Activated CD4-positive, alpha-beta T cell treated with anti-CD3 and anti-CD28 coated beads, Interleukin-2, amount 10 ng/mL, durations not matched to agents 24 days and 14 days (primary cell): ENCODE measurements at regions of chr6 and their contacts with region 1.

Region 1: GRCh38 chr6:31680840-31681671 is at the start of gene LY6G5C:
- DNase-seq: peak; percentile 89
- H3K4me3 Mint-ChIP-seq: peak within 1 kb of the TSS; percentile 83
- H3K27ac Mint-ChIP-seq: peak within 1 kb of the TSS; percentile 82
- H3K4me1 Mint-ChIP-seq: peaks cover 25% of the 10 kb centered on the region
- H3K27me3 Mint-ChIP-seq: no peaks in the 10 kb centered on the region
- total RNA-seq, gene LY6G5C: 4.1 and 4.9 TPM in 2 replicates

Region 2: DNA sequence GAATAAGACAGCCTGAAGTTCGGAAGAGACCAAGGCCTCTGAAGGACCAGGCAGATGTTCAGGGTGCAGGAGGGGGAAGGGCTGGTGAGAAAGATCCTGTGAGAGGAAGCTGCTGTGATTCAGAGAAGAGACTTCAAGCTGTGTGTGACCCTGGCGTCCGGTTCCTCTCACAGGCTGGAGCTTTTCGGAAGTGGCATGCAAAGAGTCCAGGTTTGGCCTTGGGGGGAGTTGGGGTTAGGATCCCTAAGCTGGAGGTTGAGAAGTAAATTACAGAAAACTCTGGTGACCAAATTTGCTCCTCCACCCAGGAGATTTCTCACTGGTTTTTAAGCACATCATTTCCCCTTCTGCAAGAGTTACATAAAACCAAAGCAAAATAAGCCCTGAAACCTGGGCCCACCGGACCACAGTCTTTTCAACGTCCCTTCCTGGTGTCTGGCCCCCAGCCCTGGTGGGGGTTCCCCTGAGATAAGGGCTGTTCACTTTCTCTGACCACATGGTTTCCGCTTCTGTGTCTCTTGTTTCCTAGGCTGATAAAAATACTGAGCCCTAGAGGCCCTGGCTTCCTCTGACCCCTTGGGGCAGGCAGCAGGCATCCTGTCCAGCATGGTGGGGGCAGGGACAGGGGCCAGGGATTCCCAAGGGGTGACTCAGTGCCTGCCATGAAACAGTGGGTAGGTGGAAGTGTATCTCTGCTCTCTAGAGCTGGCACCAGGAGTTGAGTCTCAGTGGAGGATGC is 120.9 kb before region 1 on chr6:
- intact Hi-C with region 1: no loop called
- DNase-seq: peak; percentile 85
- H3K4me3 Mint-ChIP-seq: peak overlapping the region; percentile 78
- H3K27ac Mint-ChIP-seq: peak overlapping the region; percentile 86
- H3K4me1 Mint-ChIP-seq: peaks cover 60% of the 10 kb centered on the region
- H3K27me3 Mint-ChIP-seq: peaks cover 19% of the 10 kb centered on the region

Region 3: DNA sequence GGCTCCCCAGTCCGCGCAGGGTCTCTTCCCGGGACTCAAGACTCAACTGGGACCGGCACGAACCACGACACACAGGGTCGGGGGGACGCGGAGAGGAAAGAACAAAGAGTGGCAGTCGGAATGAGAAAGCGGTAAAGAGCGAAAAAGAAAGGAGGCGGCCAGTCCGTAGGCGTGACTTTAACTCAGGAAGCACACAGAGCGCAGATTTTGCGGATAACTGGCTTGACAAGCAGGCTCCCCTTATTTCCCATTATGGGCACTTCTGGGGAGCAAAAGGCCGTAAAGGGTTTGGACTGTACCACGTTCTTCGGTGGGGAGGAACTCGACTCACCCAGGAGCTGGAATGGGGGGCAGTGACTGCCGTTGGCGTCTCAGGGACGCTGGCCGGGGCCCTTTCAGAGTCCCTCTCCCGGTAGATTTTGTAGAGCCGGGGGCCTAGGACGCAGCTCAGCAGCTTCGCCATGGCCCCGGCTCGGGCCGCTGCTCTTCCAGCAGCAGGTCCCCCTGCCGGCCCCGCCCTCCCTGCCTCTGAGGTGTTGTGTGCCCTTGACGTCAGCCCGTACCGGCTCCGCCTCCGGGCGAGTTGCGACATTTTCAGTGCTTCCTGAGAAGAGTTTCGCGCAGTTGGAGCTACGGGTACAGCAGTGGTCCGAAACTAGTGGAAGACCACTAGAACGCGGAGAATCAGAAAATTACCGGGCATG is 21.9 kb after region 1 on chr6 and contains the start of gene ABHD16A:
- intact Hi-C with region 1: loop called (anchors 2 kb)
- DNase-seq: peak; percentile 99
- H3K4me3 Mint-ChIP-seq: peak within 1 kb of the TSS; percentile 98
- H3K27ac Mint-ChIP-seq: peak within 1 kb of the TSS; percentile 99
- H3K4me1 Mint-ChIP-seq: peaks cover 24% of the 10 kb centered on the region
- H3K27me3 Mint-ChIP-seq: no peaks in the 10 kb centered on the region
- total RNA-seq, gene ABHD16A: 43.1 and 44.7 TPM in 2 replicates

Region 4: GRCh38 chr6:31769684-31770371 is 88.8 kb after region 1 on chr6:
- intact Hi-C with region 1: loop called (anchors 1 kb)
- DNase-seq: peak; percentile 96
- H3K4me3 Mint-ChIP-seq: no peak overlapping the region
- H3K27ac Mint-ChIP-seq: peak overlapping the region; percentile 46
- H3K4me1 Mint-ChIP-seq: peaks cover 24% of the 10 kb centered on the region
- H3K27me3 Mint-ChIP-seq: no peaks in the 10 kb centered on the region

Region 5: GRCh38 chr6:31827286-31828079 is 146.4 kb after region 1 on chr6 and contains the start of gene HSPA1B:
- intact Hi-C with region 1: loop called (anchors 1 kb)
- DNase-seq: peak; percentile 98
- H3K4me3 Mint-ChIP-seq: peak within 1 kb of the TSS; percentile 87
- H3K27ac Mint-ChIP-seq: peak within 1 kb of the TSS; percentile 93
- H3K4me1 Mint-ChIP-seq: peaks cover 37% of the 10 kb centered on the region
- H3K27me3 Mint-ChIP-seq: no peaks in the 10 kb centered on the region
- total RNA-seq, gene HSPA1B: 156 and 161 TPM in 2 replicates

Region 6: DNA sequence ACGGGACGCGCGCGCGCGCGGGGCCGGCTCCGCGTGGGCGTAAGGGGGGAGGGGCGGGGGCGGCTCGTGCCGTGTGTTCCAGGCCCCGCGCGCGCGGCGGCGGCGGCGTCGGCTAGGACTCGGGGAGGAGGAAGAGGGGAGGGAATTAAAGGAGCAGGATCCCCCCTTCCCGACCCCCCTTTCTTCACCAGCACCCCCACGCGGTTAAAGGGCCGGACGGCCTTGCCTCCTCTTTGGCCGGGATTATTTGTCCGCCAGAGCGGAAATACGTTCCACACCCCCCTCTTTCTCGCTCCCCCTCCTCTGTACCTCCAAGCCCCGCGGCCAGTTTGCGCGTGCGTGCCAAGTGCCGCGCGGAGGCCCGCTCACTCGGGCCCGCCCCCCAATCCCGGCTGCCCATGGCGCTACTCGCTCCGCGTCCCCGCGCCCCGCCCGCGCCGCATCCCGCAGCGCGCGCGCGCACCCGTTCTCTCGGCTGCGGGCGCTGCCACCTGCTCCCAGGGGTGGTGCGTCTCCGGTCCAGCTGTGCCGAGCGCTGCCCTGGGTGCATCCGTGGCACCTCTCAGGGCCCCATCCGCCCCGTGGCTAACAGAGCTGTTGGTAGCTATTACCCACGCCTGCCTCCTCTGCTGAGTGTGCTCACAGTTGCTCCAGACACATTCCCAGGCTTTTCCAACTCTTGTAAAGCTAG is 221.0 kb after region 1 on chr6 and contains the start of gene ZBTB12:
- intact Hi-C with region 1: no loop called
- DNase-seq: peak; percentile 96
- H3K4me3 Mint-ChIP-seq: peak within 1 kb of the TSS; percentile 91
- H3K27ac Mint-ChIP-seq: peak within 1 kb of the TSS; percentile 91
- H3K4me1 Mint-ChIP-seq: peaks cover 31% of the 10 kb centered on the region
- H3K27me3 Mint-ChIP-seq: peaks cover 6% of the 10 kb centered on the region
- total RNA-seq, gene ZBTB12: 3.7 and 4.6 TPM in 2 replicates